Activated CD8-positive, alpha-beta T cell treated with anti-CD3 and anti-CD28 coated beads for 36 hours (primary cell): ENCODE measurements at regions of chr5 and their contacts with region 1.

Region 1: GRCh38 chr5:178232124-178232919 is at the start of gene PHYKPL:
- DNase-seq: peak; percentile 74
- ATAC-seq: peak; percentile 64
- H3K4me3 Mint-ChIP-seq: peak within 1 kb of the TSS; percentile 91
- H3K27ac Mint-ChIP-seq: peak within 1 kb of the TSS; percentile 87
- H3K4me1 Mint-ChIP-seq: peaks cover 58% of the 10 kb centered on the region
- H3K27me3 Mint-ChIP-seq: no peaks in the 10 kb centered on the region
- CTCF ChIP-seq: no peak
- total RNA-seq, gene PHYKPL: 60.4 to 62.1 TPM

Region 2: DNA sequence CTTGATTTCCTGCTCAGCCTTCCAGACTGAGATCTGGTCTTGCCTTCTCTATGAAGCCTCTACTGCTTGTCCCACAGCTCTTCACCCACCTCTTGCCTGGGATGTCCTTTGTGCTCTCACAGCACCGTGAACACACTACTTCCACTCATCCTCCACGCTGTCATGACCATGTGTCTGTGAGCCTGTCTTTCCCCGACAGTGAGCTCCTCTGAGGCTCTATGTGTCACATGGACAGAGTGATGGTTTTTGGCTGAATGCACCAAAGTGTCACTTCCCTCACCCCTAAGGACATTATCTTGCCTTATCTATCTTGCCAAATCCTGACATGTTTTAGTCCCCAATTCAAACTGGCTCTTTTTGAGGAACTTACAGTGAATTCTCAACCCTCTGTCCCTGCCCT is 11.0 kb before region 1 on chr5:
- CTCF ChIA-PET with region 1: interaction called, 4 read pairs
- POLR2A ChIA-PET with region 1: interaction called, 431 read pairs
- intact Hi-C with region 1: no loop called
- DNase-seq: no peak
- ATAC-seq: no peak
- H3K4me3 Mint-ChIP-seq: no peak overlapping the region
- H3K27ac Mint-ChIP-seq: peak overlapping the region; percentile 27
- H3K4me1 Mint-ChIP-seq: peaks cover 21% of the 10 kb centered on the region
- H3K27me3 Mint-ChIP-seq: no peaks in the 10 kb centered on the region
- CTCF ChIP-seq: no peak

Region 3: DNA sequence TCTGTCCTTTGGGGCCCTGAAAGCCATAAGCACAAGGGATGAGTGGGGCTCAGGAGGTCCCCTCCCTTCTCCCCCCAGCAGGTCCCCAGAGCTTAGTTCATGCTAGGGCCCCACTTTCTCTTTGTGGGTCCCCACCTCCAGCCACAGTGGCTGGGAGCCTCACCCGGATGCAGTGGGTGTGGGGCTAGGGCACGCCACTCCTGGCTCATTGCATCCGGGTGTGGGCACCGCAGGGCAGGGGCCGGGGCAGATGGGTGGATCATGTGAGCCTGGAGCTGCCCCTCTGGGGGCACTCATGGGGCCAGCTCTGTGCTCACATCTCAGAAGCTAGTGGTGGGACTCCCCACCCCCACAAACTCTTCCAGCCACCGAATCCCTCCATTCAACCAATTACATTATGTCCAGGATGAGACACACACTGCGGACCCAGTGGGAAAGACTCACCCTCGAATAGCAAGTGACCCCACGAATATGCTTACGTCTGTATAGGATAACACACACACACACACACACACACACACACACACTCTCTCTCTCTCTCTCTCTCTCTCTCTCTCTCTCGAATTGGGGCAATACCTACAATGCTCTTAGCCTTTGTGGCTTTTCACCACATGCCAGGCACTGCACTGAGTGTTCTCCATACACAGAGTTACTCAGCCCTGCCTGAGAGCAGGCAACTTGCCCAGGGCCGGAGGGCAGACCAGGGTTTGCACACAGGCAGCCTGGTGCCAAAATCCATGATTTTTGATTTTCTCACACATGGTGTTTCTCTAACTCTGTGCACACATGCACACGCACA is 17.1 kb after region 1 on chr5:
- CTCF ChIA-PET with region 1: interaction called, 40 read pairs
- POLR2A ChIA-PET with region 1: no interaction called
- intact Hi-C with region 1: no loop called
- DNase-seq: peak; percentile 79
- ATAC-seq: peak; percentile 78
- H3K4me3 Mint-ChIP-seq: peak overlapping the region; percentile 20
- H3K27ac Mint-ChIP-seq: peak overlapping the region; percentile 87
- H3K4me1 Mint-ChIP-seq: peaks cover 27% of the 10 kb centered on the region
- H3K27me3 Mint-ChIP-seq: no peaks in the 10 kb centered on the region
- CTCF ChIP-seq: no peak